Activated CD4-positive, alpha-beta memory T cell treated with anti-CD3 and anti-CD28 coated beads, Interleukin-2, amount 10 ng/mL, durations not matched to agents 7 days and 5 days (primary cell): ENCODE measurements at regions of chr9 and their contacts with region 1.

Region 1: DNA sequence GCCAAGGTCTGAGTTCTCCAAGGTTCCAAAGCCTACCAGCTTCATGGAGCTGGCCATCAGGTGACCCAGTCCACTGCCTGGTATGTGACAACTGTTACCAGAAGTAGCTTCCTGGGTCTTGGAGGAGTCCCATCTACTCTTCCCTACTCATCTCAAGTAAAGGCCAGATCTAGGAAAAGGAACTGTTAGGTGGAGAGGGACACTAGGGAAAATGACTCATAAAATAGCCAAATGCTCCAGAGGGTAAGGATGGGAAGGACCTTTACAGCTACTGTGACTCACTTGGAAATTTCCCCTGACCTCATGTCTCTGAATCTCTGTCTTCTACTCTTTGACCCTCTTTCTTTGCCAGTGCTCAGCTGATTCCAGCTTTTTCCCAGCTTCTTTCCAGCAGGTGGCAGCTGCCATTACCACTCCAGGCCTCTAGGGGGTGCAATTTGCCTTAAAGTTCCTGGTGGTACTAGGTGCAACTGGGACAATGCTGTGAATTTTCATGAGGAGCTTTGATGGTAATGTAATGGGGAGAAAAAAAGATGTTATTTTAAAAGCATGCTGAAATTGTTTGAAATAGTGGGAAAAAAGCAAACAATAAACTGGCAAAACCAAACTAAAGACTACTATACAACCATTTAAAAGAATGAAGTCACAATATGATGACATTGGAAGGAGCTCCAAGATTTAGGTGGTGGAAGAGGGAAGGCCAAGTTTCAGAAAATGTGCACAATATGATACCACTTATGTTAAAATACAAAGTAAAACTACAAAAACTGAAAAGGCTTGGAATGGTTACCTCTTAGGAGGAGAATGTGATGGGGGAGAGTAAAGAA is 27.1 kb upstream of the MYORG start:
- DNase-seq: peak; percentile 56
- H3K4me3 Mint-ChIP-seq: no peak overlapping the region
- H3K27ac Mint-ChIP-seq: no peak overlapping the region
- H3K4me1 Mint-ChIP-seq: no peaks in the 10 kb centered on the region
- H3K27me3 Mint-ChIP-seq: no peaks in the 10 kb centered on the region

Region 2: GRCh38 chr9:34376596-34377403 is 27.0 kb before region 1 on chr9 and contains the start of gene MYORG:
- CTCF ChIA-PET with region 1: interaction called, 10 read pairs
- POLR2A ChIA-PET with region 1: no interaction called
- DNase-seq: peak; percentile 99
- H3K4me3 Mint-ChIP-seq: peak within 1 kb of the TSS; percentile 85
- H3K27ac Mint-ChIP-seq: peak within 1 kb of the TSS; percentile 72
- H3K4me1 Mint-ChIP-seq: peaks cover 45% of the 10 kb centered on the region
- H3K27me3 Mint-ChIP-seq: peaks cover 11% of the 10 kb centered on the region
- total RNA-seq, gene MYORG: 2.7 to 4.7 TPM

Region 3: DNA sequence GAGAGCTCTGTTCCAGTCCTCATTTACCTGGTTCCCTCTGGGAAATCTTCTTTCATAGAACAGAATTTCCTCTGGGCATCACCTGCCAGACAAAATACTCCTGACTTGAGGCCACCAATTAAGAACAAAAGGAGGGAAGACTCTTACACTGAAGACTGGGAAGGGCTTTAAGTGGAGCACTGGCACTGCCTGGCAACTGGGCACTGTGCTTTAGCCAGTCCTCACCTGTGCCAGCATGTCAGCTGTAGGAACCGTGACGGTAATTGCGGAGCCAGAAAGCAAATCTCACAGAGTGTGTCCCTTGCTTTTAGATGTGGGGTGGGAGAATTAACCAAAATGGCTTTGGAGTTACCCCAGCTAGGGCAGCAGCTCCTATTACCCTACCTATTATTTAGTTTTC is 14.0 kb after region 1 on chr9:
- CTCF ChIA-PET with region 1: interaction called, 23 read pairs
- POLR2A ChIA-PET with region 1: no interaction called
- DNase-seq: no peak
- H3K4me3 Mint-ChIP-seq: no peak overlapping the region
- H3K27ac Mint-ChIP-seq: no peak overlapping the region
- H3K4me1 Mint-ChIP-seq: no peaks in the 10 kb centered on the region
- H3K27me3 Mint-ChIP-seq: no peaks in the 10 kb centered on the region

Region 4: DNA sequence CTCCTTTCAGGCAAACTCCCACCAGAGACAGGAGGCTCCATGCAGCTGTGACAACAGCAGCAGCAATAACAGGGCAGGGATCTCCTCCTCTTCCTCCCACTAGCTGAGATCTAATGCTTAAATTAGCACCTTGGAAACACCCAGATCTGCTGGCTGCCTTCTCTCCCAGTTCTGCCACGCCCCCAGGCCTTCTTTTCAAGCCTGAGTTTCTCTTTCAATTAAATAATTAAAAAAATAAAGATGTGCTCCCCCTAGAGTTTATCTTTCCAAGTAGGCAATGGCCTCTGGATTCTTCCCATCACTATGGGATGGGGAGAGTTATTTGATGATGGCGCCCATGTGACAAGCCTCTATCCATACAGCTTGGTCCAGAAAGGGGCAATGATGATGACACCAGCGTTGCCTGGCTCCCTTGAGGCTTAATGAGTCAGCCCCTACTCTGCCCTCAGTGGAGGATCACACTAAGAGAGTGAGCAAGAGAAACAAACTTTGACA is 50.9 kb after region 1 on chr9:
- CTCF ChIA-PET with region 1: interaction called, 11 read pairs
- POLR2A ChIA-PET with region 1: no interaction called
- DNase-seq: no peak
- H3K4me3 Mint-ChIP-seq: no peak overlapping the region
- H3K27ac Mint-ChIP-seq: no peak overlapping the region
- H3K4me1 Mint-ChIP-seq: peaks cover 62% of the 10 kb centered on the region
- H3K27me3 Mint-ChIP-seq: peaks cover 4% of the 10 kb centered on the region

Region 5: DNA sequence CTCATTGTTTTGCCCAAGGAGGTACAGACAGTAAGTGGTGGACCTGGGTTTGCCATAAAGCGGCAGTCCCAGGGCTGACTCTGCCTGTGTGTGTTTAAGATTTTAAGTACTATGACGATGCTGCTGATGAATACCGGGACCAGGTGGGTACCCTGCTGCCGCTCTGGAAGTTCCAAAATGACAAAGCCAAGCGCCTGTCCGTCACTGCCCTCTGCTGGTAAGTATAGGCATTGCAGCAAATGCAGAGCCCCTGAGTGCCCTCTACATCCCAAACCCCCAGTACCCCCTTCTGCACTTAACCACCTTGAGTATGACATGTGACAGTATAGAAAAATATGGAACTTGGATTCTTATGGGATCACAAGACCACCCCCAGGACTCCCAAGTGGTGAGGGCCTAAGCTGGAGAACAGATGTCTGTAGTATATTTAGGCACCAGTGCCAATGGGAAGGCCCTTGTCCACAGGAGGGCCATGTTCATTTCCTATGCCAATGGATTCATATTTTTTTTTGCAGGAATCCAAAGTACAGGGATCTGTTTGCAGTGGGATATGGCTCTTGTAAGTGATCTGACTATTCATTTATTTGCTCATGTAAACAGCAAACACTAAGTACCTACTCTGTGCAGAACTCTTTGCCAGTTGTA is 97.0 kb after region 1 on chr9:
- CTCF ChIA-PET with region 1: interaction called, 31 read pairs
- POLR2A ChIA-PET with region 1: no interaction called
- DNase-seq: peak; percentile 75
- H3K4me3 Mint-ChIP-seq: no peak overlapping the region
- H3K27ac Mint-ChIP-seq: no peak overlapping the region
- H3K4me1 Mint-ChIP-seq: peaks cover 9% of the 10 kb centered on the region
- H3K27me3 Mint-ChIP-seq: peaks cover 13% of the 10 kb centered on the region

Region 6: GRCh38 chr9:34591248-34591916 is 187.6 kb after region 1 on chr9:
- CTCF ChIA-PET with region 1: interaction called, 10 read pairs
- POLR2A ChIA-PET with region 1: no interaction called
- DNase-seq: peak; percentile 77
- H3K4me3 Mint-ChIP-seq: peak overlapping the region; percentile 13
- H3K27ac Mint-ChIP-seq: no peak overlapping the region
- H3K4me1 Mint-ChIP-seq: peaks cover 34% of the 10 kb centered on the region
- H3K27me3 Mint-ChIP-seq: peaks cover 70% of the 10 kb centered on the region